A673 (cell line): ENCODE measurements at regions of chr15 and their contacts with region 1.

Region 1: GRCh38 chr15:101192081-101192480 is 59.8 kb downstream of the CHSY1 start:
- DNase-seq: no peak
- H3K4me3 ChIP-seq: no peak overlapping the region
- H3K27ac ChIP-seq: no peak overlapping the region
- H3K4me1 ChIP-seq: peaks cover 29% of the 10 kb centered on the region
- H3K27me3 ChIP-seq: no peaks in the 10 kb centered on the region
- CTCF ChIP-seq: no peak

Region 2: GRCh38 chr15:101135532-101136166 is 56.4 kb before region 1 on chr15:
- CTCF ChIA-PET with region 1: no interaction called
- POLR2A ChIA-PET with region 1: no interaction called
- intact Hi-C with region 1: no loop called
- DNase-seq: no peak
- H3K4me3 ChIP-seq: no peak overlapping the region
- H3K27ac ChIP-seq: no peak overlapping the region
- H3K4me1 ChIP-seq: no peaks in the 10 kb centered on the region
- H3K27me3 ChIP-seq: no peaks in the 10 kb centered on the region
- CTCF ChIP-seq: no peak

Region 3: GRCh38 chr15:101210466-101210865 is 18.4 kb after region 1 on chr15:
- CTCF ChIA-PET with region 1: no interaction called
- POLR2A ChIA-PET with region 1: interaction called, 14 read pairs
- intact Hi-C with region 1: no loop called
- DNase-seq: no peak
- H3K4me3 ChIP-seq: no peak overlapping the region
- H3K27ac ChIP-seq: no peak overlapping the region
- H3K4me1 ChIP-seq: peaks cover 16% of the 10 kb centered on the region
- H3K27me3 ChIP-seq: no peaks in the 10 kb centered on the region
- CTCF ChIP-seq: no peak

Region 4: GRCh38 chr15:101221902-101222301 is 29.8 kb after region 1 on chr15:
- CTCF ChIA-PET with region 1: interaction called, 16 read pairs
- POLR2A ChIA-PET with region 1: no interaction called
- intact Hi-C with region 1: no loop called
- DNase-seq: no peak
- H3K4me3 ChIP-seq: no peak overlapping the region
- H3K27ac ChIP-seq: no peak overlapping the region
- H3K4me1 ChIP-seq: peaks cover 10% of the 10 kb centered on the region
- H3K27me3 ChIP-seq: no peaks in the 10 kb centered on the region
- CTCF ChIP-seq: no peak

Region 5: GRCh38 chr15:101307048-101307896 is 115.2 kb after region 1 on chr15:
- CTCF ChIA-PET with region 1: no interaction called
- POLR2A ChIA-PET with region 1: no interaction called
- intact Hi-C with region 1: no loop called
- DNase-seq: no peak
- H3K4me3 ChIP-seq: no peak overlapping the region
- H3K27ac ChIP-seq: no peak overlapping the region
- H3K4me1 ChIP-seq: no peaks in the 10 kb centered on the region
- H3K27me3 ChIP-seq: no peaks in the 10 kb centered on the region
- CTCF ChIP-seq: no peak

Region 6: DNA sequence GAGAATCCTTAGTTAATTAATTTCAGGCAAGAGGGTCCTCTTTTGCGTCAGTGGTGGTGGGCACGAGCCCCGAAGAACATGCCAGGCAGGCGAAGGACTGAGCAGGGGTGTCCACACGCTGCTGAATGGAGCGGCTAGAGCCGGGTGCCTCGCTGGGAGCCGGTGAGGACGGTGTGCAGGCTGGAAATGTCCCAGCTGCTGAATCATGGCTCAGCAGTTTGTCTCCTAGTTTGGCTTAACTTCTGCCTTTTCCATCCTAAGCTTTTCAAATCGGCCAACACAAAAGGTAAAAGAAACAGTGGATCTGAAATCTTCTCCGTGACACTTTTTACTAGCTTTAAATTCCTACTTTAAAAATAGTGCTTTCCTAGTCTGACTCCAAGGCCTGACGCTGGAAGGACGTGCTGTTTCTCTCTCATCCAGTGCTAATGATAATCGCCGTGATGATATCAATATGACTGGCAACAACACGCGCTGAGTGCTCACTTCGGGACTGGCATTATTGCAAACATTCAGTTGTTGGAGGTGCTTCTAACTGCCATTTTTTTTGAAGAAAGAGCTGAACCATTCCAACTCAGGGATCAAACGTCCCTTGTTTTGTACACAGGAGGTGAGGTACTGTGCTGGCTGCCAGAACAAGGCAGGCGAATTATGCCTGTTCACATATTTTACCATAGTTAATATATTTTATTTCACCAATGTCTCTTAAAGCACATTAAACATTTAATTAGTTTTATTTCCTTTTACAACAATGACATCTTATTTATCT is 277.6 kb after region 1 on chr15:
- CTCF ChIA-PET with region 1: no interaction called
- POLR2A ChIA-PET with region 1: no interaction called
- intact Hi-C with region 1: no loop called
- DNase-seq: no peak
- H3K4me3 ChIP-seq: no peak overlapping the region
- H3K27ac ChIP-seq: no peak overlapping the region
- H3K4me1 ChIP-seq: no peaks in the 10 kb centered on the region
- H3K27me3 ChIP-seq: peaks cover 6% of the 10 kb centered on the region
- CTCF ChIP-seq: no peak